Right cardiac atrium (tissue), 5 donors: ENCODE measurements at regions of chr11 and their contacts with region 1.

Region 1: GRCh38 chr11:59598961-59599360 is 16.6 kb downstream of the OSBP start:
- DNase-seq: no peak
- ATAC-seq: no peak
- H3K4me3 ChIP-seq: no peak overlapping the region
- H3K27ac ChIP-seq: no peak overlapping the region
- H3K4me1 ChIP-seq: no peaks in the 10 kb centered on the region
- H3K27me3 ChIP-seq: no peaks in the 10 kb centered on the region

Region 2: GRCh38 chr11:59641156-59641555 is 42.2 kb after region 1 on chr11:
- intact Hi-C with region 1: loop called in 1 of 4 experiments (anchors 10 kb)
- DNase-seq: no peak
- ATAC-seq: no peak
- H3K4me3 ChIP-seq: no peak overlapping the region
- H3K27ac ChIP-seq: no peak overlapping the region
- H3K4me1 ChIP-seq: no peaks in the 10 kb centered on the region
- H3K27me3 ChIP-seq: no peaks in the 10 kb centered on the region

Region 3: DNA sequence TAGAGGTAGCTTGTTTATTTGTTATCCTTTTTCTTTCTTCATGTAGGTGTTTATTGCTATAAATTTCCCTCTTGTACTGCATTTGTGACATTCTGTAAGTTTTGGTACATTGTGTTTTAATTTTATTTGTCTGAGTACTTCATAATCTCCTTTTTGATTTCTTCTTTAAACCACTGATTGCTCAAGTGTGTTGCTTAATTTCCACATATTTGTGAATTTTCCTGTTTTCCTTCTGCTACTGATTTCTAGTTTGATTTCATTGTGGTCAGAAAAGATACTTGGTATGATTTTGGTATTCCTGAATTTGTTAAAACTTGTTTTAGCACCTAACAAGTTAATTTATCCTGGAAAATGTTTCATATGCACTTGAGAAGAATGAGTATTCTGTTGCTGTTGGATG is 99.5 kb after region 1 on chr11:
- intact Hi-C with region 1: no loop called
- DNase-seq: no peak
- ATAC-seq: no peak
- H3K4me3 ChIP-seq: no peak overlapping the region
- H3K27ac ChIP-seq: no peak overlapping the region
- H3K4me1 ChIP-seq: no peaks in the 10 kb centered on the region
- H3K27me3 ChIP-seq: no peaks in the 10 kb centered on the region